PC-3 (cell line): ENCODE measurements at regions of chr1 and their contacts with region 1.

Region 1: DNA sequence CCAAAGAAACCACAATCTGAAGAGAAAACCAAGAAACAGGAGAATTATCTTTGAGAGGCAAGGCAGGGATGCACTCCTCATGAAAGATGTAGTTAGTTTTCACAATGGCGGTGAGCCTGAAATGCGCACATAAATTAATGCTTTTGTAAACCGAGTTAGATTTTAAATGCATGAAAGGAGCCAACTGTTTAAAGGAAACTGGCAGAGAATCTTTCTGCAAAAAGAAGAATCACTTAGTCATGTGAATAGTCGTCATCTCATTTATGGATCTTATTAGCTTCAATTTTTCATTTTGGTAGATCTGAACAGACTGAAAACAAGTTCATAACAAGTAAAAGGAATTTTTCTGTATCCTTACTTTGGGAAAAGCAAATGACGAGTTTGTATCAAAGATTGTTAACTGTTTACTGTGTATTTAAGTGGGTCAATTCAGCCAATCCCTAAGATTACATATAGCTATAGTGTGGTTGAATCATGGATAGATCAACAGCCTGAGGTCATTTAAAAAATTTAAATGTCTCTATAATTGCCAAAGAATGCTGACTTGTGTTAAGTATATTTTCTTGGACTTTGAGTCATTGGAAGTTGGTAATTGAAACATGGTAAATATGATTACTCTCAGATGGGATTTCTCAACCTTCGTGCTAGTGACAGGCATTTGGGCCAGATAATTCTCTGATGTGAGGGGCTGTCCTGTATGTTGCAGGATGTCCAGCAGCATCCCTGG is 226.6 kb upstream of the KAZN start:
- DNase-seq: peak; percentile 93
- ATAC-seq: peak; percentile 94
- H3K4me3 ChIP-seq: peak overlapping the region; percentile 28
- H3K27ac ChIP-seq: peak overlapping the region; percentile 92
- H3K4me1 ChIP-seq: peaks cover 33% of the 10 kb centered on the region
- H3K27me3 ChIP-seq: no peaks in the 10 kb centered on the region
- CTCF ChIP-seq: no peak

Region 2: DNA sequence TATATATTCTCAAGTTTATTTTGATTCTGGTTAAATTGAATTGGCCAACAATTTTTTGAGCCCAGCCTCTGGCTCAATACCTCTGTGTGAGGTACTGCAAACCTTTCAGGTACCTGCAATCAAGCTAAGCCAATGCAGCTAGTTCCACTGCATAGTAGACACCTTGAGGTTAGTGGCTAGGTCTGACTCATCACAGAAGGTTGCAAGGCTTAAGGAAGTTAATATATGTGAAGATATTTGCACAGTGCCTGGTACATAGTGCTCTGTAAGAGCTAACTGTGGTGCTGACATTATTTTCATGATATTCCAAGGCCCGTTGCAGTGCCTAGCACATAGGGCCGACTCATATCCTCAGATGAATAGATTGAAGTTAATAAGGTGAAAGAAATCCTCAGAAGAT is 103.9 kb before region 1 on chr1:
- CTCF ChIA-PET with region 1: no interaction called
- POLR2A ChIA-PET with region 1: no interaction called
- intact Hi-C with region 1: no loop called
- DNase-seq: peak; percentile 84
- ATAC-seq: peak; percentile 100
- H3K4me3 ChIP-seq: no peak overlapping the region
- H3K27ac ChIP-seq: no peak overlapping the region
- H3K4me1 ChIP-seq: no peaks in the 10 kb centered on the region; the same call in 1 of the 2 replicates
- H3K27me3 ChIP-seq: no peaks in the 10 kb centered on the region
- CTCF ChIP-seq: no peak

Region 3: DNA sequence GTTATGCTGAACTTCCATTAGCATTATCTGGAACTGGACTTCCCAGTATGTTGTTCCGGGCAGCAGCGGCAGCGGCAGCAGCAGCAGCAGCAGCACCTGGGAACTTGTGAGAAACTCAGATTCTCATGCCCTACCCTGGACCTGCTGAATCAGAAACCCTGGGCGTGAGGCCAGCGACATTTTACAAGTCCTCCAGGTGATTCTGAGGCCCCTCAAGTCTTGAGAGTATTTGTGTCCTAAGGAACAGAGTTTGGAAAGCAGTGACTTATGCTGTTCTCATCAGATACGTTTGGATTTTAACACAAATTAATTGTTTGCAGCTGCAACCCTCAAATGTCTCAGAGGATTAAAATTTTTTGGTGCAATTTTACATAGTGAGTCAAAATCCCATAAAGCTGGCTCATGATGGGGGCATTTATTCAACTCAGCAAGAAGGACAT is 69.4 kb after region 1 on chr1:
- CTCF ChIA-PET with region 1: no interaction called
- POLR2A ChIA-PET with region 1: no interaction called
- intact Hi-C with region 1: loop called (anchors 2 kb)
- DNase-seq: peak; percentile 98
- ATAC-seq: peak; percentile 91
- H3K4me3 ChIP-seq: no peak overlapping the region
- H3K27ac ChIP-seq: peak overlapping the region; percentile 99
- H3K4me1 ChIP-seq: peaks cover 47% of the 10 kb centered on the region
- H3K27me3 ChIP-seq: no peaks in the 10 kb centered on the region
- CTCF ChIP-seq: no peak

Region 4: GRCh38 chr1:14516974-14517840 is 145.3 kb after region 1 on chr1:
- CTCF ChIA-PET with region 1: no interaction called
- POLR2A ChIA-PET with region 1: no interaction called
- intact Hi-C with region 1: loop called (anchors 5 kb)
- DNase-seq: peak; percentile 96
- ATAC-seq: peak; percentile 90
- H3K4me3 ChIP-seq: 0 out of 2 replicates have a peak overlapping the region, but pooled peaks have one; percentile 9
- H3K27ac ChIP-seq: peak overlapping the region; percentile 99
- H3K4me1 ChIP-seq: peaks cover 48% of the 10 kb centered on the region
- H3K27me3 ChIP-seq: no peaks in the 10 kb centered on the region
- CTCF ChIP-seq: no peak

Region 5: DNA sequence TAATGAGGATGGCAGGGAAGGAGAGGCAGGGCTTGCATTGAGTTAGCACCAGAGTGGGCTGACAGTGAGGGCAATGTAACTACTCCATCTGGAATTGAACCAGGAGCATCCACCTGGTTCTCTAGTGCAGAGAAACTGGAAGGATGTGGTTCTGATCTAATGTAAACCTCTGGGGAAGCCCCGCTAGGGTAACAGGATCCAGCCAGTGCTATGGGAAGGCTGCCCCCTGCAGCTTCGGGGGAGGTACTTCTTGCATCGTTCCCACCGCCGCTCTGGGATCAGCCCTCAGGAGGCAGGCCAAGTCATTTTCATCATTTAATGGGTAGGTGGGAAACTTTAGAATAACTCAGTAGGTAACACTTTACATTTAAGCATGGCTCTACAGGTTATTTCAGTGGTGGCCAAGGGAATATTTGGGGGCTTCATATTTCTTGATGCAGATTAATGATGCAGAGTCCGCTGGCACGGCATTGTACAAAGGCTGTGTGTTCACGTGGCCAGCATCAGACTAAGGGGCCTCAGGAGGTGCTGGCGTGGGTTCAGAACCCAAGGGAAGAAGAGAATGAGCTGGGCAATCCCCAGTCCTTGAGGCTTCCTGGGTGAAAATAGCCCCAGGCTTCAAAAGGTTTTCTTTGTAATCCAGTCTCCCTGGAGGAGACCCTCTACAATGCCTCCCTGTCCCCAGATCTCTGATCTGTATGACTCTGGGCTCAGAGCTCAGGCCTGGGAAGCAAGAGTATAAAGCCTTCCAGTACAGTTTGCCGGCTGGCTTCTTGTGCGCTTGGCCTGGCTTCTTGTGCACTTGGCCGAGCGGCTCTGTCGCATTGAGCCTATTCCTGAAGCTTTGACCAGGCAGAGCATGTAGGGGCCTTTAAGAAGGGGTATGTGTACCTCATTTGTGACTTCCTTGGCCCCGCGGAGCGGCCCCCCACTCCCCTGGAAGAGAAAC is 200.2 kb after region 1 on chr1:
- CTCF ChIA-PET with region 1: no interaction called
- POLR2A ChIA-PET with region 1: no interaction called
- intact Hi-C with region 1: loop called (anchors 1 kb)
- DNase-seq: peak; percentile 10
- ATAC-seq: no peak
- H3K4me3 ChIP-seq: no peak overlapping the region
- H3K27ac ChIP-seq: no peak overlapping the region
- H3K4me1 ChIP-seq: peaks cover 10% of the 10 kb centered on the region
- H3K27me3 ChIP-seq: no peaks in the 10 kb centered on the region
- CTCF ChIP-seq: peak; percentile 47; the same call in 1 of the 2 replicates